Common myeloid progenitor, CD34-positive (primary cell): ENCODE measurements at regions of chr4 and their contacts with region 1.

Region 1: GRCh38 chr4:10164877-10165283 is 48.3 kb upstream of the WDR1 start:
- DNase-seq: peak in 2 of 3 donors; percentile 35 to 43
- H3K4me3 ChIP-seq: no peak overlapping the region
- H3K27ac ChIP-seq: no peak overlapping the region
- H3K4me1 ChIP-seq: peaks cover 0 to 9% (median 5%) of the 10 kb centered on the region in 4 experiments
- H3K27me3 ChIP-seq: no peaks in the 10 kb centered on the region

Region 2: GRCh38 chr4:10033191-10033881 is 131.5 kb before region 1 on chr4:
- CTCF ChIA-PET with region 1: no interaction called
- POLR2A ChIA-PET with region 1: no interaction called
- DNase-seq: peak in 2 of 3 donors; percentile 27 to 32
- H3K4me3 ChIP-seq: no peak overlapping the region
- H3K27ac ChIP-seq: no peak overlapping the region
- H3K4me1 ChIP-seq: peaks cover 2 to 17% (median 13%) of the 10 kb centered on the region in 4 experiments
- H3K27me3 ChIP-seq: peaks cover 0 to 2% (median 0%) of the 10 kb centered on the region in 5 experiments

Region 3: DNA sequence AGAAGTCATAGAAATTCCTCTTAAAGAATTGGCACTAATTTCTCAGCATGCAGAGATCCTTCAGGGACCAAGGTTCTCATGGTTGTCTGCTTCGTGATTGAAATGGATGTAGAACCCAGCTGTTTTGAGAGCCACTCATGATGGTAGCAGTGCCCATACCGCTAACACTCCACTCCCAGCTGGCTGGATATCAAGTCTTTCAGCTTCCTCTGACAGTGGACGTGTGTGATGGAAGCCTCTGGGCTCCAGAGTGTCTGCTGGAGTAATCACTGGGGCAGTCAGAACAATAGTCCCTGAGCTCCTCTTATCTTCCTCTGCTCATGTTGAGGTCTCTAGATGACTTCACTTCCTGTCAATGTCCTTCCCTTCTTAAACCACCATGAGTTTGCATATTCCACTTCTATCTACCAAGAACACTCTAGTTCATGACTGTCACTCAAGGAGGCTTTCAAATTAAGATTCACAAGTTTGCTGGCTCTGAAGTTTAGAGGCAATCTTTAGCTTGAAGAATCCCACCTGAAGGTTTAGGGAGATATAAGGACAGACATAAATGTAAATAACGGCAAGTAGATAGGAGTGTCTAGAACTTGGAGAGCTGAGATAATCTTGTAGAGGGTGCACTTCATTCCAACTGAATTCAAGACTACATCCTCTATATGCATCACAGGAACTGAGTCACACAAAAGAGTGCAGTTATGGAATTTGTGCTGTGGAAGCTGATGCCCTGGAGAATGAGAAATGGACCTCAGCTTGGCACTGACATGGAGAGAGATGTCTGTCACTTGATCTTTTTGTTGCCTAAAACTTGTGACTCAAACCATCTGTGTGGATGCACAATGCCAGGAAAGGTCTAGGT is 16.3 kb after region 1 on chr4:
- CTCF ChIA-PET with region 1: interaction called, 183 read pairs
- POLR2A ChIA-PET with region 1: interaction called, 7 read pairs
- DNase-seq: peak; percentile 95 to 100 (median 98)
- H3K4me3 ChIP-seq: peak overlapping the region in 3 of 7 experiments; percentile 31 to 46 (median 41)
- H3K27ac ChIP-seq: peak overlapping the region; percentile 69 to 80
- H3K4me1 ChIP-seq: peaks cover 23 to 59% (median 45%) of the 10 kb centered on the region in 4 experiments
- H3K27me3 ChIP-seq: no peaks in the 10 kb centered on the region

Region 4: DNA sequence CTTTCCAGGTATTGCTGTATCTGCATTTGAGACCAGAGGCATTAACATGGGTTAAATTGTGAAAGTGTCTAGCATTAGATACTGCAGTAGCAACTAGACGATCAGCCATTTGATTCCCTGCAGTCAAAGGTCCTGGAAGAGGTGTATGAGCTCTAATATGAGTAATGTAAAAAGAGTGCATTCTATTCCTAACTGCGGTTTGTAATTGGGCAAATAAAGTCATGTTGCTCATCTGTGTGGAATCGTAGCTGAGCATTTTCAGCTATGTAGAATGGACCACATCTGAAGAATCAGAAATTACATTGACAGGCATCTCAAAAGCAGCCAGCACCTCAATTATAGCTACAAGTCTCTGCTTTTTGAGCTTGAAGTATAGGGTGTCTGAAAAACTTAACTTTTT is 134.7 kb after region 1 on chr4:
- CTCF ChIA-PET with region 1: no interaction called
- POLR2A ChIA-PET with region 1: no interaction called
- DNase-seq: no peak
- H3K4me3 ChIP-seq: no peak overlapping the region
- H3K27ac ChIP-seq: no peak overlapping the region
- H3K4me1 ChIP-seq: no peaks in the 10 kb centered on the region
- H3K27me3 ChIP-seq: peaks cover 0 to 8% (median 0%) of the 10 kb centered on the region in 5 experiments

Region 5: DNA sequence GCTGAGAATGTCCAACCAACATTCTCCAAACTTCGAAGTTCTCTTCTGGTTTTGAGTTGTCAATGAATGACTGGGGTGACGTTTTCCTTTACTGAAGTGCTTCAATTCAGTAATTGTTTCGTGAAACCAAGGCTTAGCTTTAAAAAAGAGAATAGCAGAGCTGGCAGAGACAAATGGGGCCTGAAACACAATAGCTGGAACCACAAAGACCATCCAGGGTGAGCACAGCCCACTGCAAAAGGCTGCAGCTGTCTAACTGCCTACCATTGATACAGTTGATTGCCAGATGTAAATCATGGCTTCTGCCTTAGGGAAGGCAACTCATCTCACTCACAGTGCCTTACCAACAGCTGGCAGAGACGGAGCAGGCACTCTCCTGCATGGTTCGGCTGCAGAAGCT is 371.0 kb after region 1 on chr4:
- CTCF ChIA-PET with region 1: interaction called, 36 read pairs
- POLR2A ChIA-PET with region 1: no interaction called
- DNase-seq: no peak
- H3K4me3 ChIP-seq: no peak overlapping the region
- H3K27ac ChIP-seq: no peak overlapping the region
- H3K4me1 ChIP-seq: no peaks in the 10 kb centered on the region
- H3K27me3 ChIP-seq: no peaks in the 10 kb centered on the region